Activated CD8-positive, alpha-beta memory T cell treated with anti-CD3 and anti-CD28 coated beads, Interleukin-2, amount 10 ng/mL, durations not matched to agents 7 days and 5 days (primary cell): ENCODE measurements at regions of chr4 and their contacts with region 1.

Region 1: GRCh38 chr4:10157478-10158332 is 41.1 kb upstream of the WDR1 start:
- DNase-seq: peak; percentile 60
- ATAC-seq: peak; percentile 60
- H3K4me3 Mint-ChIP-seq: no peak overlapping the region
- H3K27ac Mint-ChIP-seq: no peak overlapping the region
- H3K4me1 Mint-ChIP-seq: peaks cover 28% of the 10 kb centered on the region
- H3K27me3 Mint-ChIP-seq: peaks cover 5% of the 10 kb centered on the region

Region 2: GRCh38 chr4:10180927-10181782 is 23.4 kb after region 1 on chr4:
- CTCF ChIA-PET with region 1: interaction called, 116 read pairs
- DNase-seq: peak; percentile 78
- ATAC-seq: peak; percentile 88
- H3K4me3 Mint-ChIP-seq: peak overlapping the region; percentile 7
- H3K27ac Mint-ChIP-seq: peak overlapping the region; percentile 96
- H3K4me1 Mint-ChIP-seq: peaks cover 53% of the 10 kb centered on the region
- H3K27me3 Mint-ChIP-seq: no peaks in the 10 kb centered on the region

Region 3: GRCh38 chr4:10403633-10404445 is 246.1 kb after region 1 on chr4:
- CTCF ChIA-PET with region 1: interaction called, 63 read pairs
- DNase-seq: no peak
- ATAC-seq: peak; percentile 47
- H3K4me3 Mint-ChIP-seq: no peak overlapping the region
- H3K27ac Mint-ChIP-seq: no peak overlapping the region
- H3K4me1 Mint-ChIP-seq: no peaks in the 10 kb centered on the region
- H3K27me3 Mint-ChIP-seq: peaks cover 9% of the 10 kb centered on the region

Region 4: GRCh38 chr4:10413177-10413576 is 255.5 kb after region 1 on chr4:
- CTCF ChIA-PET with region 1: interaction called, 15 read pairs
- DNase-seq: no peak
- ATAC-seq: no peak
- H3K4me3 Mint-ChIP-seq: no peak overlapping the region
- H3K27ac Mint-ChIP-seq: no peak overlapping the region
- H3K4me1 Mint-ChIP-seq: peaks cover 24% of the 10 kb centered on the region
- H3K27me3 Mint-ChIP-seq: no peaks in the 10 kb centered on the region

Region 5: GRCh38 chr4:10535912-10536311 is 378.2 kb after region 1 on chr4:
- CTCF ChIA-PET with region 1: interaction called, 54 read pairs
- DNase-seq: no peak
- ATAC-seq: no peak
- H3K4me3 Mint-ChIP-seq: no peak overlapping the region
- H3K27ac Mint-ChIP-seq: no peak overlapping the region
- H3K4me1 Mint-ChIP-seq: peaks cover 1% of the 10 kb centered on the region
- H3K27me3 Mint-ChIP-seq: peaks cover 16% of the 10 kb centered on the region

Region 6: DNA sequence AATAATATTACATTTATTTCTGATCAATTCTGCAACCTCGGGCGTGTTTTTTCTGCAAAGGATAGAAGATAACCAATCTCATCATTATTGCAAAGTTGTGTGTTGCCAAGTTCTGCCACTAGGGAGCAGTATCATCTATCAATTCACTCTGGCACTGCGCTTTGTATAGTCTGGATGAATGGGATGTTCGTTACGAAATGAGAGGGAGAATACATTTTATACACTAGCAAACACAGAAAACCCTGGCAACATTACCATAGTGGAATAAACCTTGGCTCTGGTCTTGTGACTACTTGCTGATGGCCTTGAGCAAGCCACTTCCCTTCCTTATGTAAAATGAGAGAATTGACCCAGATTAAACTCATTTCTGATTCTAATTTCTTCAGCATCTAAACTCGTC is 397.0 kb after region 1 on chr4:
- CTCF ChIA-PET with region 1: interaction called, 31 read pairs
- DNase-seq: peak; percentile 47
- ATAC-seq: peak; percentile 55
- H3K4me3 Mint-ChIP-seq: no peak overlapping the region
- H3K27ac Mint-ChIP-seq: no peak overlapping the region
- H3K4me1 Mint-ChIP-seq: no peaks in the 10 kb centered on the region
- H3K27me3 Mint-ChIP-seq: peaks cover 14% of the 10 kb centered on the region